B cell (primary cell): ENCODE measurements at regions of chr9 and their contacts with region 1.

Region 1: DNA sequence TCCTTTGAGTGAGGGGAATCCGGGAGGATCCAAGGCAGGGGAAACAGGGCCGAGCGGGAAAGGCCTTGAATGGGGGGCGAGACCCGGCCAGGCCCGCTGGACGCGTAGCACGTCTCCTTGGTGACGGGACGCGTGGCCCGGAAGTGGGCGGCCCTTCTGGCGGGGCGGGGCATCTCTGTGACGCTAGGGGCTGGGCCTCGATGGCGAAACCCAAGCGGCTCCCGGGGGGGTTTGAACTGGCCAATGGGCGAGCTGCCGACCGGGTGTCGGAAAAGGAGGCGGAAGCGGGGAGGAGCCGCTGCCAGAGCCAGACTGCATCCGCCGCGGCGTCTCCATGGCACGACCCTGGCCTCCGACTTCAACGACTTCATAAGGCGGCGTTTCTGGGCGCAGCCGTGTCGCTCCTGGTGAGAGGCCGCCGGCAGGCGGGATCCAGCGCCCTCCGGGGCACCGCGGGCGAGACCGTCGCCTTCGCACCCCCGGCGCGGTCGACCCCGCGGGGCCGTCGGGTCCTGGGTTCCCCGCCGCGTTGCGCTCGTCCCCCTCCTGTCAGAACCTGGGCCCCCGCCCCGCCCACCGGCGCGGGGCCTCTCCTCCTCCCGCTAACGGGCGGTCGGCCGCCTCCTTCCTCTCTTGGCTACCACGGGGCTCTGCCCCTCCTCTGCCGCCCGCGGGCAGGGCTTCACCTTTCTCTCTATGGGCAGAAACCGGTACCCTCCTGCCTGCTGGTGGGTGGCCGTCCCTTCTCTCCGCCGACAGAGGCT is at the start of gene ODF2:
- DNase-seq: peak; percentile 98
- ATAC-seq: peak; percentile 85
- H3K4me3 ChIP-seq: peak within 1 kb of the TSS; percentile 23 to 89 (median 81)
- H3K4me3 Mint-ChIP-seq: peak within 1 kb of the TSS; percentile 93
- H3K27ac ChIP-seq: peak within 1 kb of the TSS; percentile 65 to 92
- H3K27ac Mint-ChIP-seq: peak within 1 kb of the TSS; percentile 93
- H3K4me1 ChIP-seq: peaks cover 8 to 13% of the 10 kb centered on the region in 2 donors
- H3K4me1 Mint-ChIP-seq: peaks cover 18% of the 10 kb centered on the region
- H3K27me3 ChIP-seq: no peaks in the 10 kb centered on the region
- H3K27me3 Mint-ChIP-seq: no peaks in the 10 kb centered on the region
- CTCF ChIP-seq: no peak
- total RNA-seq, gene ODF2: 36.6 and 42.9 TPM in 2 replicates

Region 2: GRCh38 chr9:128339771-128340690 is 116.0 kb before region 1 on chr9 and contains the start of gene SLC27A4:
- CTCF ChIA-PET with region 1: no interaction called
- POLR2A ChIA-PET with region 1: no interaction called
- intact Hi-C with region 1: loop called (anchors 1 kb)
- DNase-seq: peak; percentile 88
- ATAC-seq: peak; percentile 93
- H3K4me3 ChIP-seq: peak within 1 kb of the TSS; percentile 69 to 80 (median 70)
- H3K4me3 Mint-ChIP-seq: peak within 1 kb of the TSS; percentile 98
- H3K27ac ChIP-seq: peak within 1 kb of the TSS; percentile 7 to 48
- H3K27ac Mint-ChIP-seq: peak within 1 kb of the TSS; percentile 91
- H3K4me1 ChIP-seq: peaks cover 11 to 15% of the 10 kb centered on the region in 2 donors
- H3K4me1 Mint-ChIP-seq: peaks cover 9% of the 10 kb centered on the region
- H3K27me3 ChIP-seq: no peaks in the 10 kb centered on the region
- H3K27me3 Mint-ChIP-seq: no peaks in the 10 kb centered on the region
- CTCF ChIP-seq: no peak
- total RNA-seq, gene SLC27A4: 12.0 and 12.9 TPM in 2 replicates

Region 3: DNA sequence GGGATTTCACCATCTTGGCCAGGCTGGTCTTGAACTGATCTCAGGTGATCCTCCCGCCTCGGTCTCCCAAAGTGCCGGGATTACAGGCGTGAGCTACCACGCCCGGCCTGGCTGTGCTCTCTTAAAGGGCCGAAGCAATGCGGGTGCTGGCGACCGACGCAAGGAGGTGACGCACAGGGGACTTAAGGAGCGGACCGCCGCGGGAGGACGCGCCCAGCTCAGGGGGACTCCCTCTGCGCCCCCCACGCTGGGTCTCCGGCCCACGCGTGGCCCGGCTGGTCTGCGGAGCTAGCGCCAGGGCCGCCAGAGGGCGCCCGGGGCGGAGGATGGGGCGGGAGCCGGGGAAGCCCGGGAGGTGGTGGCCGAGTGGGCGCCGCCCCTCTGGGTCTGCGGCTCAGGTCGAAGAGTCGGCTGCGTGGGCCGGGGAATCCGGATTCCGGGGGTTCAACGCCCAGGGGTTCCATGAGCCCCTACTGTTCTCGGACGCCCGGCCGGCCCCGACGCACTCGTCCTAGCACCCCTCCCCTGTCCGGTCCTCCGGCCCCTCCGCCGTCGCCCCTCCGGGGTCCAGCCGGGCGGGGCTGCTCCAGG is 35.9 kb before region 1 on chr9:
- CTCF ChIA-PET with region 1: interaction called, 4 read pairs
- POLR2A ChIA-PET with region 1: interaction called, 5 read pairs
- intact Hi-C with region 1: loop called (anchors 1 kb)
- DNase-seq: peak; percentile 87
- ATAC-seq: peak; percentile 86
- H3K4me3 ChIP-seq: peak overlapping the region; percentile 31 to 94 (median 73)
- H3K4me3 Mint-ChIP-seq: peak overlapping the region; percentile 82
- H3K27ac ChIP-seq: peak overlapping the region in 1 of 2 donors; percentile 59
- H3K27ac Mint-ChIP-seq: peak overlapping the region; percentile 20
- H3K4me1 ChIP-seq: peaks cover 20 to 21% of the 10 kb centered on the region in 2 donors
- H3K4me1 Mint-ChIP-seq: peaks cover 7% of the 10 kb centered on the region
- H3K27me3 ChIP-seq: peaks cover 0 to 34% (median 8%) of the 10 kb centered on the region in 4 experiments
- H3K27me3 Mint-ChIP-seq: peaks cover 22% of the 10 kb centered on the region
- CTCF ChIP-seq: peak; percentile 92

Region 4: DNA sequence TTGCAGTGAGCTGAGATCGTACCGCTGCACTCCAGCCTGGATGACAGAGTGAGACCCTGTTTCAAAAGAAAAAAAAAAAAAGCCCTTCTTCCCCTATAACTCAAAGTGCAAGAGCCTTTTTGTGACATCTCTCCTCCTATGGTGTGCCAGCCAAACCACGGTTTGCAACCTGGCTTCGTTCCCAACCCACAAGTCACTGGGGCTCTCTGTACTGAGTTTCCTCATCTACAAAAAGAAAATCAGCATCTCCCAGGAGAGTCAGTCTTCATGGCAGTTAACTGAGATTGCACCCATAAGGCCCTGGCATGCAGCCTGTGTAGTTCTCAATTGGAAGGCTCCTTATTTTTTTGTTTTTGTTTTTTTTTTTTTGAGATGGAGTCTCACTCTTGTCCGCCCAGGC is 14.5 kb after region 1 on chr9:
- CTCF ChIA-PET with region 1: no interaction called
- POLR2A ChIA-PET with region 1: no interaction called
- intact Hi-C with region 1: no loop called
- DNase-seq: no peak
- ATAC-seq: no peak
- H3K4me3 ChIP-seq: no peak overlapping the region
- H3K4me3 Mint-ChIP-seq: no peak overlapping the region
- H3K27ac ChIP-seq: no peak overlapping the region
- H3K27ac Mint-ChIP-seq: no peak overlapping the region
- H3K4me1 ChIP-seq: no peaks in the 10 kb centered on the region
- H3K4me1 Mint-ChIP-seq: no peaks in the 10 kb centered on the region
- H3K27me3 ChIP-seq: no peaks in the 10 kb centered on the region
- H3K27me3 Mint-ChIP-seq: no peaks in the 10 kb centered on the region
- CTCF ChIP-seq: no peak

Region 5: GRCh38 chr9:128504485-128505413 is 48.7 kb after region 1 on chr9 and contains the start of gene GLE1:
- CTCF ChIA-PET with region 1: no interaction called
- POLR2A ChIA-PET with region 1: no interaction called
- intact Hi-C with region 1: loop called (anchors 1 kb)
- DNase-seq: peak; percentile 97
- ATAC-seq: peak; percentile 93
- H3K4me3 ChIP-seq: peak within 1 kb of the TSS; percentile 85 to 97 (median 87)
- H3K4me3 Mint-ChIP-seq: peak within 1 kb of the TSS; percentile 100
- H3K27ac ChIP-seq: peak within 1 kb of the TSS; percentile 69 to 80
- H3K27ac Mint-ChIP-seq: peak within 1 kb of the TSS; percentile 99
- H3K4me1 ChIP-seq: peaks cover 8 to 13% of the 10 kb centered on the region in 2 donors
- H3K4me1 Mint-ChIP-seq: peaks cover 23% of the 10 kb centered on the region
- H3K27me3 ChIP-seq: no peaks in the 10 kb centered on the region
- H3K27me3 Mint-ChIP-seq: no peaks in the 10 kb centered on the region
- CTCF ChIP-seq: no peak
- total RNA-seq, gene GLE1: 30.3 and 31.9 TPM in 2 replicates

Region 6: DNA sequence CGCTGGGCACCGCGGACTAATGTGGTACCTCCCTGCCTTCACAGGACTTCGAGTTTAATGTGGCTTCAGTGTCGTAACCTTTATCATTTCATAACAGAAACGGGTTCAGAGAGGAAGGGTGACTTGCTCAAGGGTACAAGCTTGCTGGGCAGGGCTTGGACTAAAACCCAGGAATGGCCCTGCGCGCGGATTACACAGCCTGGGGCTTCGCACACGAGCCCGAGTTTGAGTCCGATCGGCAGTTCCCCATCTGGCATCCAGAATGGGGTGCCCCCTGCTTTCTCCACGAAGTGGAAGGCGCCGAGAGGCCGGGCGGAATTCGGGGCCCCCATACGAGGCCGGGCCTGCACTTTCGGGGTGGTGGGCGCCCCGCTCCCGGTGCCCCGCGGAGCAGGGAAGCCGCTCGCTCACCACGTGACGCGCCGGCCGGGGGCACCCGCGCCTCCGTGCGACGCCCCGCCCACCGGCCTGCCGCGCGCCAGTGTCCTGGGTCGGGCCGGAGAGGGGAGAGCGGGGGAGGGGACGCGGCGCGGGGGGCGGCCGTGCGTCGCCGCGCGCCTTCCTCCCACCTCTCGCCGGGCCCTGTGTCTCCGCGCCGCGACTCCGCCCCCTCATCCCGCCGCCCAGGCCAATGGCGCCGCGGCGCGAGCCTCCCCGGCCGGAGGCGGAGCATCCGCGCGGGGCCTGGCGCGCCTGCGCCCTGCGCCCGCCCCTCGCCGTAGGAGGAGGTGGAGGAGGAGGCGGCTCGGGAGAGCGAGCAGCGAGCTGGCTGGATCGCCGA is 232.7 kb after region 1 on chr9 and contains the start of gene SET:
- CTCF ChIA-PET with region 1: no interaction called
- POLR2A ChIA-PET with region 1: no interaction called
- intact Hi-C with region 1: loop called (anchors 5 kb)
- DNase-seq: peak; percentile 97
- ATAC-seq: peak; percentile 81
- H3K4me3 ChIP-seq: peak within 1 kb of the TSS; percentile 57 to 81 (median 70)
- H3K4me3 Mint-ChIP-seq: peak within 1 kb of the TSS; percentile 89
- H3K27ac ChIP-seq: peak within 1 kb of the TSS; percentile 89 to 91
- H3K27ac Mint-ChIP-seq: peak within 1 kb of the TSS; percentile 95
- H3K4me1 ChIP-seq: peaks cover 47 to 57% of the 10 kb centered on the region in 2 donors
- H3K4me1 Mint-ChIP-seq: peaks cover 60% of the 10 kb centered on the region
- H3K27me3 ChIP-seq: no peaks in the 10 kb centered on the region
- H3K27me3 Mint-ChIP-seq: no peaks in the 10 kb centered on the region
- CTCF ChIP-seq: no peak
- total RNA-seq, gene SET: 306 and 309 TPM in 2 replicates

Region 7: DNA sequence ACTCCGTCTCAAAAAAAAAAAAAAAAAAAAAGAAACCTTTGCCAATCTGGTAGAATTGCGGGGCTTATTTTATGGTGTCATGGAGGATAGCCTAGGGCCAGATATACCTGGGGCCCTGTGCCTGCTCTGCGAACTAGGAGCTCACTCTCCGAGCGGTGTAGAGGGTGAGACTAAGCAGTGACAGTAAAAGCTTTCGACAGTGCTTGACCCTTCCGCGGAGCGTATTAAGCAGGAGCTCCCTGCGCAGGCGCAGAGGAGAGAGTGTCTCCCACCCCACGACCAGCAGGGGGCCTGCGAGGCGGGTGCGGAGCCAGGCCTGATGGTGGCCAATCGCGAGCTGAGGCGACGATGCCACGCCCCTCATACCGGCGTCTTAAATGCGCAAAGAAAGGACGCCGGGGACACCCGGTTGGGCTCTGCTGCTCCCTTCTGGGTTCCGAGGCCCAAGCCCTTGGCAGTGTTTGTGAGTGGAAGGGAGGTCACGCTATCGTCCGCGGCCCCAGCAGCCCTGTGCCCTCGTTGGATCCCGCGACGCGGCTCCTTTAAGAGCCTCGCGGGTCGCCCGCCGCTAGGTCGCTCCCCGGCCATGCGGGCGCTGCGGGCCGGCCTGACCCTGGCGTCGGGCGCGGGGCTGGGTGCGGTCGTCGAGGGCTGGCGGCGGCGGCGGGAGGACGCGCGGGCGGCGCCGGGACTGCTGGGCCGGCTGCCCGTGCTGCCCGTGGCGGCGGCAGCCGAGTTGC is 362.2 kb after region 1 on chr9 and contains the start of gene ENDOG:
- CTCF ChIA-PET with region 1: no interaction called
- POLR2A ChIA-PET with region 1: no interaction called
- intact Hi-C with region 1: loop called (anchors 1 kb)
- DNase-seq: peak; percentile 97
- ATAC-seq: peak; percentile 95
- H3K4me3 ChIP-seq: peak within 1 kb of the TSS; percentile 68 to 76 (median 69)
- H3K4me3 Mint-ChIP-seq: peak within 1 kb of the TSS; percentile 95
- H3K27ac ChIP-seq: peak within 1 kb of the TSS in 1 of 2 donors; percentile 53
- H3K27ac Mint-ChIP-seq: peak within 1 kb of the TSS; percentile 94
- H3K4me1 ChIP-seq: peaks cover 5 to 16% of the 10 kb centered on the region in 2 donors
- H3K4me1 Mint-ChIP-seq: peaks cover 14% of the 10 kb centered on the region
- H3K27me3 ChIP-seq: no peaks in the 10 kb centered on the region
- H3K27me3 Mint-ChIP-seq: no peaks in the 10 kb centered on the region
- CTCF ChIP-seq: peak; percentile 95
- total RNA-seq, gene ENDOG: 17.1 and 19.3 TPM in 2 replicates